ENCODE measurements at regions of chr11 and their contacts with region 1.

Region 1: DNA sequence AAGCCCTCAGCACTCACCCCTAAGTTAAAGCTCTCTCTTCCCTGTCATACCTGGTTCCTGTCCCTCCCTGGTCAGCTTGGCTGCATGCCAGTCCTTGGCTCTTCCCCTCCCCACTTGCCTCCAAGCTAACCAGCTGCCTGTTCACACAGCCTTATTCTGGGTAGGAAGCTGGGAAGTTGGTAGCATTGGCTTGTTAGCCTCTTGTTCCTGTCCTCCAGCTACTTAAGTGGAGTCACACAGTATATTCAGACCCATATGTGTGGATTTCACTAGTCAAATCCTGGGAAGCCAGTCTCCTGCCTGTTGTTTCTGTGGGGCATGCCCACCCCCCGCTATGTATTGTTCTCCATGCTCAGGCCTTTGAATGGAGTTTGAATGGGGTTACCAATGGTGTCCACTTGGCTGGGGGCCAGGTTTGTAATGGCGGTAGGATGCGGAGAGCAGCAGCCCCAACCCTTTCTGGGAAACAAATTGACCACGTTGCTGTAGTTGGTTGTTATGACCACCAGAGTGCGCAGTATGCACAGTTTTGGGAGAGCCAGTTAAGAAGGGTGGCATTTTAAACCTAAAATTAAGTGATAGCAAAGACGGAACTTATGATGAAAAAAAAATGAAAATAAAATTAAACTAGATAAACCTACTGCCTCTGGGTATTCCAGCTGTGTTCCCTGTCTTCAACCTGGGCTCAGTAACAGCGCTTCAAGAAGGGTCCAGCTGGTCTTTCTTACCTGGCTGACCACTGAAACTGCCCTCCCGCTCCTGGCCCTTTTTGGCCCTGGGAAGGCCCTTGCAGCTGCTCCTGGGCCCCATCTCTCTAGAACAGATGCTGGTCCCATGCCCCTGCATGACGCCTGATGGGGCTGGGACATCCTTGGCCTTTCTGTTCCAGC is 10.7 kb upstream of the RPS3 start:
- DNase-seq: peak; percentile 70
- H3K4me3 ChIP-seq: no peak overlapping the region
- H3K27ac ChIP-seq: no peak overlapping the region
- H3K4me1 ChIP-seq: no peaks in the 10 kb centered on the region
- CTCF ChIP-seq: peak; percentile 91

Region 2: GRCh38 chr11:75280227-75280701 is 108.4 kb before region 1 on chr11:
- CTCF ChIA-PET with region 1: interaction called, 10 read pairs
- POLR2A ChIA-PET with region 1: interaction called, 3 read pairs
- intact Hi-C with region 1: loop called (anchors 1 kb)
- DNase-seq: peak; percentile 71
- H3K4me3 ChIP-seq: no peak overlapping the region
- H3K27ac ChIP-seq: no peak overlapping the region
- H3K4me1 ChIP-seq: peaks cover 11% of the 10 kb centered on the region
- CTCF ChIP-seq: peak; percentile 90

Region 3: DNA sequence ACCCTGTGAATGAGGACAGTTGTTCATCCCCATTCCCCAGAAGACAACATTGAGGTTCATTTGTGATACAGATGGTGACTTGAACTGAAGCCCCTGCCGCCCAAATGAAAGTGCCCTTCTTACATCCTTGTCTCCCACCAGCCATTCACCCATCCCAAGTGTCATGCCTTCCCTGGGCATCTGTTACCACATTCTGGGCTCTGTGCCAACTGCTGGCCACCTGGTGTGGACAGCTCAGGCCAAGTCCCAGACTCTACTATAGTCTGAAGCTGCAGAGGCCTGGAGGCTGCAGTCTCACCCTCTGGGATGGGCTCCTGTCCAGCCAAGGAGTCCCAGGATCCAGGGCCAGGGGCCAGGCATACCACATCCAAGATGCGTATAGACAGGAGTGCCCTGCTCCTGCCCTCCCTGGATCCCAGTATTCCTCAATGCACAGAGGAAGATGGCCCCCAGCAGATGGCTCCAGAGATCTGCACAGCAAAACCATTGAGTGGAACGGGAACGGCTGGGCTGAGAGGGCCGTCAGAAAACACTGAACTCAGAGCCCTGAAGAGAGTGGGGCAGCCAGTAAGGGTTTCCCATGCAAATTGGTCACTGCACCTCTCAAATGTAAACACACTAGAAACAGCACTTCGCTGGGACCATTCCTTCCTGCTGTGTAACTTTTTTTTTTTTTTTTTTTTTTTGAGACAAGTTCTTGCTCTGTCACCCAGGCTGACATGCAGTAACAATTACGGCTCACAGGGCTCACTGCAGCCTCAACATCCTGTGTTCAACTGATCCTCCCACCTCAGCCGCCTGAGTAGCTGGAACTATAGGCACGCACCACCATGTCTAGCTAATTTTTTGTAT is 60.0 kb before region 1 on chr11:
- CTCF ChIA-PET with region 1: no interaction called
- POLR2A ChIA-PET with region 1: no interaction called
- intact Hi-C with region 1: loop called (anchors 1 kb)
- DNase-seq: peak; percentile 45
- H3K4me3 ChIP-seq: no peak overlapping the region
- H3K27ac ChIP-seq: no peak overlapping the region
- H3K4me1 ChIP-seq: peaks cover 5% of the 10 kb centered on the region
- CTCF ChIP-seq: peak; percentile 65

Region 4: DNA sequence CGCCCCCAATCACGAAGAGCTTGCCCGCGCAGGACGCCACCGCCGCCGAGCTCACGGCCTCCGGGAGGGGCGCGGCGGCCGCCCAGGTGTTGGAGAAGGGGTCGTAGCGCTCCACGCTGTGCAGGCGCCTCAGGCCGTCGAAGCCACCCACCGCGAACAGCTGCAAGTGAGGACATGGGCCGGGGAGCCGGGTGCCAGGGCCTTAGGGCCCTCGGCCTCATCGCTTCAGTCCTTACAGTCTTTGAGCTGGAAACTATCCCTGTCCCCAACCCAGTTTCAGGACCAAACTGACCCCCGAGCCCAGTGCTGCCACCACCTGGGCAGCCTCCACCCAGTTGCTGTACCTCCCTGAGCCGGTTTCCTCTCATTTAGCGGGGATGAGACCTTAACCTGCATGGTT is 36.8 kb after region 1 on chr11:
- CTCF ChIA-PET with region 1: no interaction called
- POLR2A ChIA-PET with region 1: no interaction called
- intact Hi-C with region 1: loop called (anchors 2 kb)
- DNase-seq: peak; percentile 13
- H3K4me3 ChIP-seq: no peak overlapping the region
- H3K27ac ChIP-seq: no peak overlapping the region
- H3K4me1 ChIP-seq: no peaks in the 10 kb centered on the region
- CTCF ChIP-seq: peak; percentile 63

Region 5: GRCh38 chr11:75532200-75533048 is 143.8 kb after region 1 on chr11:
- CTCF ChIA-PET with region 1: no interaction called
- POLR2A ChIA-PET with region 1: no interaction called
- intact Hi-C with region 1: loop called (anchors 1 kb)
- DNase-seq: peak; percentile 79
- H3K4me3 ChIP-seq: no peak overlapping the region
- H3K27ac ChIP-seq: no peak overlapping the region
- H3K4me1 ChIP-seq: peaks cover 7% of the 10 kb centered on the region
- CTCF ChIP-seq: peak; percentile 94

Measured in OCI-LY7 (cell line).